ENCODE measurements at regions of chr6 and their contacts with region 1.

Region 1: DNA sequence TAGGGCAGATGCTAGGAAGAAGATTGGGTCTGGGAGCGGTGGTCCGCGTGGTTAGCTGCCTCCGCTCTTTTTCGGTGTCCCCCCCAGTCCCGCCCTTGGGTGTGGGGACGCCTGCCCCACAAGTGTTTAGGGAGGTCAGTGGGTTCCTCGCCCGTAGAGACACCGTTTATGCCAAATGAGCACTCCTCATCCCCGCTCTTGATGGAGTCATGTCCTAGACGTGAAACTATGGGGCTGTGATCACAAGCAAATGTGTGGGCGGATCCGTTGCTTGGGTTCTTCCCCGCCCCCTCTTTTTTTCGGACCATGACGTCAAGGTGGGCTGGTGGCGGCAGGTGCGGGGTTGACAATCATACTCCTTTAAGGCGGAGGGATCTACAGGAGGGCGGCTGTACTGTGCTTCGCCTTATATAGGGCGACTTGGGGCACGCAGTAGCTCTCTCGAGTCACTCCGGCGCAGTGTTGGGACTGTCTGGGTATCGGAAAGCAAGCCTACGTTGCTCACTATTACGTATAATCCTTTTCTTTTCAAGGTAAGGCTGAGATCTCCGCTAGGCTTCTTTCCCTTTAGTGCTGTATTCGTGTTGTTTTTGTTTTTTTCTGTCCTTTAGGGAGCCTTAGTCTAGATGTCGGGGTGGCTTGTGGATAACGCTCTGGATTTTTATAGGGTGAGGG is at the start of gene HSP90AB1:
- DNase-seq: peak; percentile 98
- H3K4me3 Mint-ChIP-seq: peak within 1 kb of the TSS; percentile 88
- H3K27ac Mint-ChIP-seq: peak within 1 kb of the TSS; percentile 99
- H3K4me1 Mint-ChIP-seq: peaks cover 42% of the 10 kb centered on the region
- H3K27me3 Mint-ChIP-seq: no peaks in the 10 kb centered on the region
- CTCF ChIP-seq: no peak
- total RNA-seq, gene HSP90AB1: 2,072 and 2,073 TPM in 2 replicates

Region 2: DNA sequence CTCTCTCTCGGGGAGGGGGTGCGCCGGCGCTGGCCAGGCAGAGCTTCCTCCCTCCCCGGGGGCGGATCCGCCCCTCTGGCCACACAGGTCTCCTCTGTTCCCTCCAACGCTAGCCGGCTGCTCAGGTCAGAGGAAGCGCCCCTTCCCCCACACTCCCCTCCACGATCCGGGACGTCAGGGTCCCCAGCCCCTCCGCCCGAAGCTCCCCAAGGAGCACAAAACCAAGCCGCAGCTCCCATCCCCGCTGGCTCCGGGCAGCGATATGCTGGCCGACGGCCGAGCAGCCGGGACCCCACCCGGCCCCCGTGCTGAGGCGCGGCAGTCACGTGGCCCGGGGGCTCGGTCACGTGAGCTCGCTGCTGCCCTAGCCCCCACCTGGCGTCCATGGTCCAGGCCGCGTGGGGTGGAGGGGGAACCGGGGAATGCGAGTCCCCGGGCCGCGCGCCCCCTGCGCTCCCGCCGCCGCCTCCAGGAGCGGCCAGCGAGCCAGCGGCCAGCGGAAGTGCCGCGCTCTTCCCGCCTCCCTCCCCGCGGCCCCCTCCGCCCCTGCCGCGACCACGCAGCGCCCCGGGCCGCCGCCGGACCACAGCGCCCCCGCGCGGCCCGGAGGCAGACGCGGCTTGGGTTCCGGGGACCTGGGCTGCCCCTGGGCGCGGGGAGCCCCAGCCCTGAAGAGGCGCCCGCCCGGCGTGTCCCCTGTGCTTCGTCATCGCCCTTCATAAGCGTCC is 10.4 kb after region 1 on chr6 and contains the start of gene SLC35B2:
- CTCF ChIA-PET with region 1: interaction called, 14 read pairs
- intact Hi-C with region 1: no loop called
- DNase-seq: peak; percentile 91
- H3K4me3 Mint-ChIP-seq: peak within 1 kb of the TSS; percentile 86
- H3K27ac Mint-ChIP-seq: peak within 1 kb of the TSS; percentile 89
- H3K4me1 Mint-ChIP-seq: peaks cover 74% of the 10 kb centered on the region
- H3K27me3 Mint-ChIP-seq: no peaks in the 10 kb centered on the region
- CTCF ChIP-seq: peak; percentile 94
- total RNA-seq, gene SLC35B2: 129 and 143 TPM in 2 replicates

Region 3: DNA sequence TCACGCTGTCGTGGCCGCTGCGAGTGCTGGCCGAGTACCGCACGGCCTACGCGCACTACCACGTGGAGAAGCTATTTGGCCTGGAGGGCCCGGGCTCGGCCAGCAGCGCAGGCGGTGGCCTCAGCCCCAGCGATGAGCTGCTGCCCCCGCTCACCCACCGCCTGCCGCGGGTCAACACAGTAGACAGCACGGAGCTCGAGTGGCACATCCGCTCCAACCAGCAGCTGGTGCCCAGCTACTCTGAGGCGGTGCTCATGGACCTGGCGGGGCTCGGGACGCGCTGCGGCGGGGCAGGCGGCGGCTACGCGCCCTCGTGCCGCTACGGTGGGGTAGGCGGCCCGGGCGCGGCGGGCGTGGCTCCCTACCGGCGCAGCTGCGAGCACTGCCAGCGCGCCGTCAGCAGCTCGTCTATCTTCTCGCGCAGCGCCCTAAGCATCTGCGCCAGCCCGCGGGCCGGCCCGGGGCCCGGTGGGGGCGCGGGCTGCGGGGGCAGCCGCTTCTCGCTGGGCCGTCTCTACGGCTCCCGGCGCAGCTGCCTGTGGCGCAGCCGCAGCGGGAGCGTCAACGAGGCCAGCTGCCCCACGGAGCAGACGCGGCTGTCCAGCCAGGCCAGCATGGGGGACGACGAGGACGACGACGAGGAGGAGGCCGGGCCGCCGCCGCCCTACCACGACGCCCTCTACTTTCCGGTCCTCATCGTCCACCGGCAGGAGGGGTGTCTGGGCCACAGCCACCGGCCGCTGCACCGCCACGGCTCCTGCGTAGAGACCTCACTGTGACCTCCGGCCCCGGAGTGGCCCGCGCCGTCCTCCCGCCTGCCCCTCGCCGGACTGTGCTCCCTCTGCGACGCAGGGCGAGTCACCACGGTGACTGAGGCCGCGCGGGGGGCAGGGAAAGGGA is 29.2 kb after region 1 on chr6:
- CTCF ChIA-PET with region 1: no interaction called
- intact Hi-C with region 1: no loop called
- DNase-seq: no peak
- H3K4me3 Mint-ChIP-seq: no peak overlapping the region
- H3K27ac Mint-ChIP-seq: no peak overlapping the region
- H3K4me1 Mint-ChIP-seq: peaks cover 9% of the 10 kb centered on the region
- H3K27me3 Mint-ChIP-seq: peaks cover 88% of the 10 kb centered on the region
- CTCF ChIP-seq: no peak

Measured in Calu3 (cell line).